ENCODE measurements at regions of chr6 and their contacts with region 1.

Region 1: GRCh38 chr6:33620856-33621710 is at the start of gene ITPR3:
- DNase-seq: peak; percentile 86
- ATAC-seq: peak; percentile 88
- H3K4me3 Mint-ChIP-seq: peak within 1 kb of the TSS; percentile 90
- H3K27ac Mint-ChIP-seq: peak within 1 kb of the TSS; percentile 92
- H3K4me1 Mint-ChIP-seq: peaks cover 54% of the 10 kb centered on the region
- H3K27me3 Mint-ChIP-seq: peaks cover 2% of the 10 kb centered on the region
- total RNA-seq, gene ITPR3: 44.9 to 71.3 TPM

Region 2: GRCh38 chr6:33585403-33586107 is 35.5 kb before region 1 on chr6:
- CTCF ChIA-PET with region 1: interaction called, 12 read pairs
- DNase-seq: peak; percentile 96
- ATAC-seq: peak; percentile 89
- H3K4me3 Mint-ChIP-seq: peak overlapping the region; percentile 75
- H3K27ac Mint-ChIP-seq: peak overlapping the region; percentile 94
- H3K4me1 Mint-ChIP-seq: peaks cover 37% of the 10 kb centered on the region
- H3K27me3 Mint-ChIP-seq: no peaks in the 10 kb centered on the region

Region 3: GRCh38 chr6:33607784-33608161 is 13.3 kb before region 1 on chr6:
- CTCF ChIA-PET with region 1: interaction called, 17 read pairs
- DNase-seq: peak; percentile 65
- ATAC-seq: peak; percentile 78
- H3K4me3 Mint-ChIP-seq: no peak overlapping the region
- H3K27ac Mint-ChIP-seq: no peak overlapping the region
- H3K4me1 Mint-ChIP-seq: peaks cover 2% of the 10 kb centered on the region
- H3K27me3 Mint-ChIP-seq: peaks cover 19% of the 10 kb centered on the region

Region 4: GRCh38 chr6:33633462-33634158 is 12.5 kb after region 1 on chr6:
- CTCF ChIA-PET with region 1: interaction called, 16 read pairs
- DNase-seq: peak; percentile 61
- ATAC-seq: peak; percentile 87
- H3K4me3 Mint-ChIP-seq: peak overlapping the region; percentile 71
- H3K27ac Mint-ChIP-seq: peak overlapping the region; percentile 11
- H3K4me1 Mint-ChIP-seq: peaks cover 55% of the 10 kb centered on the region
- H3K27me3 Mint-ChIP-seq: no peaks in the 10 kb centered on the region